CD4-positive, alpha-beta T cell (primary cell): ENCODE measurements at regions of chr2 and their contacts with region 1.

Region 1: GRCh38 chr2:190880378-190881073 is at the start of gene GLS:
- DNase-seq: peak; percentile 94 to 99 (median 95)
- ATAC-seq: peak; percentile 74
- H3K4me3 ChIP-seq: peak within 1 kb of the TSS; percentile 73
- H3K4me3 Mint-ChIP-seq: peak within 1 kb of the TSS; percentile 99
- H3K27ac ChIP-seq: peak within 1 kb of the TSS; percentile 86 to 96
- H3K27ac Mint-ChIP-seq: peak within 1 kb of the TSS; percentile 97
- H3K4me1 ChIP-seq: peaks cover 29% of the 10 kb centered on the region
- H3K4me1 Mint-ChIP-seq: peaks cover 63% of the 10 kb centered on the region
- H3K27me3 ChIP-seq: no peaks in the 10 kb centered on the region
- H3K27me3 Mint-ChIP-seq: no peaks in the 10 kb centered on the region
- CTCF ChIP-seq: no peak
- total RNA-seq, gene GLS: 215 to 224 TPM

Region 2: GRCh38 chr2:190408538-190409271 is 471.8 kb before region 1 on chr2:
- CTCF ChIA-PET with region 1: no interaction called
- POLR2A ChIA-PET with region 1: interaction called, 20 read pairs
- intact Hi-C with region 1: loop called in 1 of 2 experiments (anchors 5 kb)
- DNase-seq: peak; percentile 61 to 91 (median 72)
- ATAC-seq: peak; percentile 49
- H3K4me3 ChIP-seq: peak overlapping the region; percentile 79
- H3K4me3 Mint-ChIP-seq: peak overlapping the region; percentile 94
- H3K27ac ChIP-seq: peak overlapping the region; percentile 95 to 99
- H3K27ac Mint-ChIP-seq: peak overlapping the region; percentile 97
- H3K4me1 ChIP-seq: peaks cover 40% of the 10 kb centered on the region
- H3K4me1 Mint-ChIP-seq: peaks cover 45% of the 10 kb centered on the region
- H3K27me3 ChIP-seq: no peaks in the 10 kb centered on the region
- H3K27me3 Mint-ChIP-seq: no peaks in the 10 kb centered on the region
- CTCF ChIP-seq: no peak

Region 3: GRCh38 chr2:190853531-190854383 is 26.8 kb before region 1 on chr2:
- CTCF ChIA-PET with region 1: interaction called, 8 read pairs
- POLR2A ChIA-PET with region 1: interaction called, 41 read pairs
- intact Hi-C with region 1: loop called (anchors 1 to 2 kb)
- DNase-seq: peak in 2 of 14 experiments; percentile 15
- ATAC-seq: no peak
- H3K4me3 ChIP-seq: no peak overlapping the region
- H3K4me3 Mint-ChIP-seq: no peak overlapping the region
- H3K27ac ChIP-seq: no peak overlapping the region
- H3K27ac Mint-ChIP-seq: no peak overlapping the region
- H3K4me1 ChIP-seq: peaks cover 3% of the 10 kb centered on the region
- H3K4me1 Mint-ChIP-seq: no peaks in the 10 kb centered on the region
- H3K27me3 ChIP-seq: no peaks in the 10 kb centered on the region
- H3K27me3 Mint-ChIP-seq: no peaks in the 10 kb centered on the region
- CTCF ChIP-seq: no peak

Region 4: DNA sequence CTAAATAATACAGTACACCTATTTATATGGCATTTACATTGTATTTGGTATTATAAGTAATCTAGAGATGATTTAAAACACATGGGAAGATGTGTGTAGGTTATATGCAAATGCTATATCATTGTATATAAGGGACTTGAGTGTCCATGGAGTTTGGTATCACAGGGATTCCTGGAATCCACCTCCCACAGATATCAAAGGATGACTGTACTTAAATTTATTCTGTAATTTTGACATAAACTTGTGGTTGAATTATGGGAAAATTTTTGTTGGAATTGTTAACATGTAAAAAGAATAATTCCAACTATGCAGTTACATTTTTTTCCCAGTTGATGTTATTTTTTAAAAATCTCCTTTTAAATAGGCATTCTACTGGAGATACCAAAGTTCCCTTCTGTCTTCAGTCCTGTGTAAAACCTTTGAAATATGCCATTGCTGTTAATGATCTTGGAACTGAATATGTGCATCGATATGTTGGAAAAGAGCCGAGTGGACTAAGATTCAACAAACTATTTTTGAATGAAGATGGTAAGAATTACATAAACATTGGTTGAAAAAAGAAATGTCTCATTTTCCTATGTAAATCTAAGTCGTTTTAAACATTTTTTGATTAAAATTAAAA is 24.2 kb after region 1 on chr2:
- CTCF ChIA-PET with region 1: no interaction called
- POLR2A ChIA-PET with region 1: interaction called, 12 read pairs
- intact Hi-C with region 1: no loop called
- DNase-seq: no peak
- ATAC-seq: no peak
- H3K4me3 ChIP-seq: no peak overlapping the region
- H3K4me3 Mint-ChIP-seq: no peak overlapping the region
- H3K27ac ChIP-seq: no peak overlapping the region
- H3K27ac Mint-ChIP-seq: no peak overlapping the region
- H3K4me1 ChIP-seq: peaks cover 2% of the 10 kb centered on the region
- H3K4me1 Mint-ChIP-seq: peaks cover 11% of the 10 kb centered on the region
- H3K27me3 ChIP-seq: no peaks in the 10 kb centered on the region
- H3K27me3 Mint-ChIP-seq: no peaks in the 10 kb centered on the region
- CTCF ChIP-seq: no peak

Region 5: GRCh38 chr2:190961918-190962487 is 81.5 kb after region 1 on chr2:
- CTCF ChIA-PET with region 1: no interaction called
- POLR2A ChIA-PET with region 1: interaction called, 10 read pairs
- intact Hi-C with region 1: no loop called
- DNase-seq: no peak
- ATAC-seq: no peak
- H3K4me3 ChIP-seq: no peak overlapping the region
- H3K4me3 Mint-ChIP-seq: no peak overlapping the region
- H3K27ac ChIP-seq: no peak overlapping the region
- H3K27ac Mint-ChIP-seq: peak overlapping the region; percentile 76
- H3K4me1 ChIP-seq: peaks cover 5% of the 10 kb centered on the region
- H3K4me1 Mint-ChIP-seq: peaks cover 42% of the 10 kb centered on the region
- H3K27me3 ChIP-seq: no peaks in the 10 kb centered on the region
- H3K27me3 Mint-ChIP-seq: no peaks in the 10 kb centered on the region
- CTCF ChIP-seq: no peak

Region 6: DNA sequence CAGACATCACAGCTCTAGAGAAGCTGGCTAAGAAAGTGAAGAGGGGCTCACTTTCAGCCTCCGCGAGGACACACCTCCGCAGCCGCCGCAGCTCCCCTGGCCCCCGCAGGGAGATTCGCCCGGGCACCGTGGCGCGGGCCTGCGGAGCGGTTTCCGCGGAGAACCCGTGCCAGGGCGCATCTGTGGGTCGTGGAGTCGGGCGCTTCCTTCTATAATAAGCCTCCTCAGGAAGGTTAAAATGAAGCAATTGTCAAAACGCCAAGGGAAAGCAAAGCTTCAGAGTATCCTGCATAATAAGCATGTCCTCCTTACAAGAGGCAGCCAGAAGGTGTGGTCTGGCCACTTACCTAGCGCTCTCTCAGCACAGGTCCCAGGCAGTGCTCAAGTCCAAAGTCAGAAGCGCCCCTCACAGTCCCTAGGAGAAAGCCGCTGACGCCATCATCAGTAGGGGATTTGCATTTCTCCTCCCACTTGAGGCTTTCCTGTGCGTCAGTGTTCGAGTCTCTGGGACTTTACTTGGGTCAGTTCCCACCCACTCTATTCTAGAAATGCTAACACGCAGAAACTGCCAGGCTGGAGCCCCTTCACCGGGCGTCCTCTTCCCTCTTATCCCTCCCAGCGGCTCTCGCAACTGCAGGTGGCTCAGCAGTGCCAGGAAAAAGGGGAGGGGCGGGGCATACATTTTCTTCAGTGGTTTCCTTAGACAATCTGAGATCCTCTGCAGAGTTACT is 270.2 kb after region 1 on chr2 and contains the start of gene STAT4:
- CTCF ChIA-PET with region 1: no interaction called
- POLR2A ChIA-PET with region 1: interaction called, 18 read pairs
- intact Hi-C with region 1: no loop called
- DNase-seq: peak; percentile 52 to 96 (median 72)
- ATAC-seq: peak; percentile 83
- H3K4me3 ChIP-seq: peak within 1 kb of the TSS; percentile 83
- H3K4me3 Mint-ChIP-seq: peak within 1 kb of the TSS; percentile 89
- H3K27ac ChIP-seq: peak within 1 kb of the TSS; percentile 93
- H3K27ac Mint-ChIP-seq: peak within 1 kb of the TSS; percentile 96
- H3K4me1 ChIP-seq: peaks cover 33% of the 10 kb centered on the region
- H3K4me1 Mint-ChIP-seq: peaks cover 50% of the 10 kb centered on the region
- H3K27me3 ChIP-seq: no peaks in the 10 kb centered on the region
- H3K27me3 Mint-ChIP-seq: no peaks in the 10 kb centered on the region
- CTCF ChIP-seq: no peak
- total RNA-seq, gene STAT4: 77.1 to 83.0 TPM